Mammary epithelial cell (primary cell): ENCODE measurements at regions of chr17 and their contacts with region 1.

Region 1: DNA sequence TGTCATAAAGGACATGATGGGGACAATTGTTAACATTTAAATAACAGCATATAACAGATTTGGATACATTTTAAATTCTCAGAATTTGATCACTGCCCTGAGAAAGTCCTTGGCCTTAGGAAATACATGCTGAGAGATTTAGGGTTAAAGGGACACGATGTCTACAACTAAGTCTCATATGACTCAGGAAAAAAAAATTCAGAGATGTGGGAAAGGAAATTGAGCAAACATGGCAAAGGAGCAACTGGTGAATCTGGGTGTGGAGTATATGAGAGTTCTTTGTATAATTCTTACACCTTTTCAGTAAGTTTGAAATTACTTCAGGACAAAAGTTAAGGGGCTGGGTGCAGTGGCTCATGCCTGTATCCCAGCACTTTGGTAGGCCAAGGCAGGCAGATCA is 18.2 kb downstream of the MPP3 start:
- DNase-seq: peak; percentile 67
- H3K4me3 ChIP-seq: no peak overlapping the region
- H3K27ac ChIP-seq: no peak overlapping the region
- H3K4me1 ChIP-seq: peaks cover 12% of the 10 kb centered on the region
- H3K27me3 ChIP-seq: no peaks in the 10 kb centered on the region
- CTCF ChIP-seq: no peak

Region 2: DNA sequence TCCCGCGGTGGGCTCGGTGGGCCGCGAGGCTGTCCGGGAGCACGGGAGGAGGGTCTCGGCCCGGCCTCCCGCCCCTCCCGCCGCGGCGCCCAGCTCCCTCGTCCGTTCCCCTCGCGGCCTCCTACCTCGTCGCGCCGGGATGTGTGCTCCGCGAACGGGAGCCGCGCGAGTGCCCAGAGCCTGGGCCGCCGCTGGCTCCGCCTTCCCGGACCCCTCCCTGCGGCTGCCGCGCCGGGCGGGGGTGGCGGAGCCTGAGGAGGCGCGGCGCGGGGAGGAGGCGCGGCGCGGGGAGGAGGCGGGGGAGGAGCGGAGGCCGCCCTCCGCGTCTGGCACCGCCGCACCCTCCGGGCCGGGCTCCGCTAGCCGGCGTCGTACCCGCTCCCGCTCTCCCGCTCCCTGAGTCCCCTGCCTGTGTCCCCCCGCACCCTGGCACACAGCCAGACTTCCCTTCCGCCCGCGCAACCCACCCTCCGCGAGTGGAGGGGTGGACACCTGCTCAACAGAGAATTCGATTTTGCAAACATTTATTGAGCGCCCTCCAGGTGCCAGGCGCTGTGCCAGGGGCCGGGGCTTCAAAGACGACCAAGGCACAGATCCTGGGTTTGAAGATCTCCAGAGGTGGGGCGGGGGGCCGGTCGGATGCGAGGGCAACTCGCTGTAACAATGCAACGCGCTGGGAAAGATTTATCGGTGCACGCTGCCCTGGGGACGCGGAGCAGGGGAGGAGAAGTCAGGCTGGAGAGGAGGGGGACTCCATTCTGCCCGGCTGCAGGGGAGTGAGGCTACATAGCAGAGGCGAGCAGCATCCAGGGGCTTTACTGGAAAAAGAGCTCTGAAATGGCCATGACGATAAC is 18.5 kb after region 1 on chr17 and contains the start of gene MPP3:
- CTCF ChIA-PET with region 1: no interaction called
- dilution Hi-C with region 1: no loop called
- in situ Hi-C with region 1: no loop called
- intact Hi-C with region 1: loop called (anchors 2 kb)
- DNase-seq: peak; percentile 76
- H3K4me3 ChIP-seq: peak within 1 kb of the TSS; percentile 54 to 68 (median 67)
- H3K27ac ChIP-seq: no peak within 1 kb of the TSS
- H3K4me1 ChIP-seq: peaks cover 14% of the 10 kb centered on the region
- H3K27me3 ChIP-seq: no peaks in the 10 kb centered on the region
- CTCF ChIP-seq: no peak
- total RNA-seq, gene MPP3: 10.8 to 19.6 TPM